ENCODE measurements at regions of chr9 and their contacts with region 1.

Region 1: DNA sequence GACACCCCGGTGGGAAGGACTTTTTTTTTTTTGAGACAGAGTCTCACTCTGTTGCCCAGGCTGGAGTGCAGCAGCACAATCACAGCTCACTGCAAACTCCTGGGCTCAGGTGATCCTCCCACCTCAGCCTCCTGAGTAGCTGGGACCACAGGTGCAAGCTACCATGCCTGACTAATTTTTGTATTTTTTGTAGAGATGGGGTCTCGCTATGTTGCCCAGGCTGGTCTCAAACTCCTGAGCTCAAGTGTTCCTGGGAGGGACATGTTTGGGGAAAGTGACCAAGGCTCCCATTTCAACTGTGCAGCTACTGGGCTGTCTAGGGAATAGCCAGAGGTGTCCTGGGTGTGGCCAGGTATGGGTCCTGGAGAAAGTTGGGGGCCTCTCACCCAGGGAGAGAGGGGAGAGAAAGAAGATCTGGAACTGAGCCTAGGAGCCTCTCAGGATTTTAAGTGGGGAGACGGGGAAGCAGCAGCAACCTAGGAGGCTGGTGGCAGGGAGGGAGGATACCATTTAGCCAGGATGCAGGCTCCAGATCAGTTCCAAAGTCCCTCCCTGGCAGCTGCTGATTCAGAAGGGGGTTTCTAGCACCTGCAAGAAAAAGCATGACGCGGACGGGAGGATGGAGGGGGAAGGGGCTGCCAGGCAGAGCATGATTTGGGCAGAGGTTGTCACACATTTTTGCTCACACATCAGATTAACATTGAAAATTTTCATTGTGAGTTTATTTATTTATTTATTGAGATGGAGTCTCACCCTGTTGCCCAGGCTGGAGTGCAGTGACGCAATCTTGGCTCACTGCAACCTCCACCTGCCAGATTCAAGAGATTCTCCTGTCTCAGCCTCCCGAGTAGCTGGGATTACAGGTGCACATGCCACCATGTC is 6.7 kb upstream of the TOR1B start:
- DNase-seq: no peak
- H3K4me3 ChIP-seq: no peak overlapping the region
- H3K27ac ChIP-seq: no peak overlapping the region
- H3K4me1 ChIP-seq: no peaks in the 10 kb centered on the region
- H3K27me3 ChIP-seq: no peaks in the 10 kb centered on the region
- CTCF ChIP-seq: no peak

Region 2: GRCh38 chr9:129121483-129121882 is 674.8 kb before region 1 on chr9:
- intact Hi-C with region 1: loop called (anchors 5 kb)
- DNase-seq: no peak
- H3K4me3 ChIP-seq: no peak overlapping the region
- H3K27ac ChIP-seq: no peak overlapping the region
- H3K4me1 ChIP-seq: no peaks in the 10 kb centered on the region
- H3K27me3 ChIP-seq: no peaks in the 10 kb centered on the region
- CTCF ChIP-seq: no peak

Measured in ascending aorta (tissue), 2 donors.